Activated B cell treated with CpG ODN at 0.5 μM for 24 hours (primary cell): ENCODE measurements at regions of chr12 and their contacts with region 1.

Region 1: GRCh38 chr12:53220801-53221202 is 11.2 kb downstream of the RARG start:
- DNase-seq: peak; percentile 74
- ATAC-seq: peak; percentile 77
- H3K4me3 Mint-ChIP-seq: peak overlapping the region; percentile 89
- H3K27ac Mint-ChIP-seq: peak overlapping the region; percentile 96
- H3K4me1 Mint-ChIP-seq: peaks cover 48% of the 10 kb centered on the region
- H3K27me3 Mint-ChIP-seq: no peaks in the 10 kb centered on the region
- CTCF ChIP-seq: no peak

Region 2: GRCh38 chr12:53205747-53206419 is 14.9 kb before region 1 on chr12:
- CTCF ChIA-PET with region 1: interaction called, 3 read pairs
- POLR2A ChIA-PET with region 1: interaction called, 36 read pairs
- intact Hi-C with region 1: loop called (anchors 1 kb)
- DNase-seq: peak; percentile 50
- ATAC-seq: peak; percentile 66
- H3K4me3 Mint-ChIP-seq: peak overlapping the region; percentile 89
- H3K27ac Mint-ChIP-seq: peak overlapping the region; percentile 83
- H3K4me1 Mint-ChIP-seq: peaks cover 93% of the 10 kb centered on the region
- H3K27me3 Mint-ChIP-seq: no peaks in the 10 kb centered on the region
- CTCF ChIP-seq: no peak

Region 3: GRCh38 chr12:53231826-53232645 is 11.2 kb after region 1 on chr12 and contains the start of gene RARG:
- CTCF ChIA-PET with region 1: no interaction called
- POLR2A ChIA-PET with region 1: interaction called, 6 read pairs
- intact Hi-C with region 1: loop called (anchors 1 kb)
- DNase-seq: no peak
- ATAC-seq: peak; percentile 67
- H3K4me3 Mint-ChIP-seq: peak within 1 kb of the TSS; percentile 81
- H3K27ac Mint-ChIP-seq: no peak within 1 kb of the TSS
- H3K4me1 Mint-ChIP-seq: peaks cover 36% of the 10 kb centered on the region
- H3K27me3 Mint-ChIP-seq: peaks cover 2% of the 10 kb centered on the region
- CTCF ChIP-seq: no peak
- total RNA-seq, gene RARG: 5.5 and 7.5 TPM in 2 replicates

Region 4: DNA sequence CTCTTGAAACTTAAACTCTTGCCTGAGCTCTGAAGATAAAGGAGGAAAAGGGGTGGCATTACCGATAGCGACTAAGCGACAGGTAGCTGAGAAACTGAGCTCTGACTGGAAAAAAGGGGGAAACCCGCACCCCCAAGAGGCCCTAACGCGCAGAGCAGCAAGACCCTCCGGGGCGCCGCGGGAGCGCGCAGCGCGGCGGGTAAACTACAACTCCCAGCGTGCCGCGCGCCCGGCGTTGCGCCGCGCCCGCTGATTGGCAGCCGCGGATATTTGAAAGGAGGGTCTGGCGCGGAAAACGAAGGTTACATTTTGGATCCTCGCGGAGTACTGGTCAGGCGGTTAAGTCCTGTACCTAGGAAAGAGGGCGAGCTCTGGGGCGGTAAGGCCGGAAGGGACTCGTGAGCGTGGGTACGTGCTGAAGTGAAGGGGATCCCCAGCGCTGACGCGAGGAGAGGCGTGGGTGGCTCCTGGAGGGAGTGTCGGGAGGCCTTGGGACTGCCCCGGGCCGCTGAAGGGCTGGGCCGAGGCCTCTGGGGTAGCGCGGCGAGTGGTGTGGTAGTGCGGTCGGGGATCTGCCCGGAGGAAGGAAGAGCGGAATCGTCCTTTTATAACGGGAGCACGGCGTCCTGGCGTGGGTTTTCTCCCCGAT is 47.3 kb after region 1 on chr12 and contains the start of gene ESPL1:
- CTCF ChIA-PET with region 1: interaction called, 16 read pairs
- POLR2A ChIA-PET with region 1: interaction called, 66 read pairs
- intact Hi-C with region 1: loop called (anchors 1 kb)
- DNase-seq: peak; percentile 84
- ATAC-seq: peak; percentile 94
- H3K4me3 Mint-ChIP-seq: peak within 1 kb of the TSS; percentile 98
- H3K27ac Mint-ChIP-seq: peak within 1 kb of the TSS; percentile 91
- H3K4me1 Mint-ChIP-seq: peaks cover 21% of the 10 kb centered on the region
- H3K27me3 Mint-ChIP-seq: no peaks in the 10 kb centered on the region
- CTCF ChIP-seq: no peak
- total RNA-seq, gene ESPL1: 6.2 and 8.2 TPM in 2 replicates

Region 5: DNA sequence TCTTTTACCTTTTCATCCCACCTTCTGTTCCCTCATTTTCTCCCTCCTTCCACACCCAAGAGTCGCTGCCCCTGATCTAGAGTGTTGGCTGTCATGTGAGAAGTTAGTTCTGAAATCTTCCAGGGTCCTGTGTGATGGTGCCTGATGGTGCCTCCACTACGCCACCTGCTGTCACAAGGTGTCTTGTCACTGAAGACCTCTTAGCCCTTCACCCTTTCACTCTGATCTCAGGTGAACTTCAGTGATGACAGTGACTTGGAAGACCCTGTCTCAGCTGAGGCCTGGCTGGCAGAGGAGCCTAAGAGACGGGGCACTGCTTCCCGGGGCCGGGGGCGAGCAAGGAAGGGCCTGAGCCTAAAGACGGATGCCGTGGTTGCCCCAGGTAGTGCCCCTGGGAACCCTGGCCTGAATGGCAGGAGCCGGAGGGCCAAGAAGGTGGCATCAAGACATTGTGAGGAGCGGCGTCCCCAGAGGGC is 67.0 kb after region 1 on chr12:
- CTCF ChIA-PET with region 1: interaction called, 298 read pairs
- POLR2A ChIA-PET with region 1: interaction called, 33 read pairs
- intact Hi-C with region 1: loop called (anchors 2 kb)
- DNase-seq: peak; percentile 53
- ATAC-seq: peak; percentile 100
- H3K4me3 Mint-ChIP-seq: no peak overlapping the region
- H3K27ac Mint-ChIP-seq: no peak overlapping the region
- H3K4me1 Mint-ChIP-seq: peaks cover 4% of the 10 kb centered on the region
- H3K27me3 Mint-ChIP-seq: no peaks in the 10 kb centered on the region
- CTCF ChIP-seq: no peak

Region 6: DNA sequence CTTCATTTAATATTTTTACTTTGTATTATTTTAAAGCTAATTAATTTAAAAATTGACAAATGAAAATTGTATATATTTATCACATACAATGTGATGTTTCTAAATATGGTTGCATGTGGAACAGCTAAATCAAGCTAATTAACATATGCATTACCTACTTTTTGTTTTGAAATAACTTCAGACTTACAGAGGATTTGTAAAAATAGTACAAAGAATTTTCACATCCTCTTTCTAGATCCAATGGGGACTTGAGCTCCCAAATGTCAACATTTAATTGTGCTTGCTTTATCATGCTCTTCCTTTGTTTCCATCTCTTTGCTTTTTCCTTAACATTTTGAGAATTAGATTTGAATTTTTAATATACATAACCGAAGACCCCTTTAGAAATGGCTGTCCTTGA is 1420.8 kb after region 1 on chr12:
- CTCF ChIA-PET with region 1: no interaction called
- POLR2A ChIA-PET with region 1: no interaction called
- intact Hi-C with region 1: no loop called
- DNase-seq: no peak
- ATAC-seq: no peak
- H3K4me3 Mint-ChIP-seq: peak overlapping the region; percentile 17
- H3K27ac Mint-ChIP-seq: no peak overlapping the region
- H3K4me1 Mint-ChIP-seq: peaks cover 12% of the 10 kb centered on the region
- H3K27me3 Mint-ChIP-seq: peaks cover 12% of the 10 kb centered on the region
- CTCF ChIP-seq: no peak